Sciatic nerve (tissue), 2 donors: ENCODE measurements at regions of chr3 and their contacts with region 1.

Region 1: GRCh38 chr3:15268033-15268631 is 62.1 kb downstream of the CAPN7 start:
- DNase-seq: peak; percentile 94
- ATAC-seq: peak; percentile 82

Region 2: DNA sequence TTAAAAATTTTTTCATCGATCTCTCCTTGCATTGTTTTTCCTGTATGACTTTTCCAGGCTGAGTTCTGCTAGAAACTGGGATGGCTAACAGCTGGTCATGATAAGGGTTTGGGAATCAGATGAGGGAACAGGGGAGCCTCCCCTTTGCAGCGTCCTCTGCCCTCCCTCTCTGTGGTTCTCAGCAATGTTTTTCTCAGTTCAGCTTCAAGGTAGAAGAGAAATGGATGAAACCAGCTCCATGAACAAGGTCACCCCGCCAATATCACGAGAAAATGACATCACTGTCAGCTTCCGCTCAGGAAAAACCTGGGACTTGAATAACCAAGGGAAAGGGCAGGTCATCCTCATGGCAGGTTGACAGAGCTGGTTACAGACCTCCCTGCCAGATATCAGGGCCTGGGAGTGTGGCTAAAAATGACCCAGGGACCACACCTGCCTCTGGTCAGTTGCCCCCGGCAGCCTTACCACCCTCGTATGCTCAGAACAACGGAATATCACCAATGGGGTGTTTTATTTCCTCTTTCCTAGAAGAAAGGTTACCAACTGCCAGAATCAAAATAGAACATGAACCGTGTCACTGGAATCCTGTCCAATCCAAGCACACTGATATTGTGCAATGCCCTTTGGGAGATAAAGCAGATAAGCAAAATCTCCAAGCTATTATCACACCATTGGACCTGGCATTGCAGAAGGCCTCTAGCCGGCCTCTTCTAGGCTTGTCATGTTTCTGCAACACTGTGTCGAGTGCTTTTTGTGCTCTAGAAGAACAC is 1063.4 kb before region 1 on chr3:
- intact Hi-C with region 1: no loop called
- DNase-seq: no peak
- ATAC-seq: peak; percentile 87

Region 3: DNA sequence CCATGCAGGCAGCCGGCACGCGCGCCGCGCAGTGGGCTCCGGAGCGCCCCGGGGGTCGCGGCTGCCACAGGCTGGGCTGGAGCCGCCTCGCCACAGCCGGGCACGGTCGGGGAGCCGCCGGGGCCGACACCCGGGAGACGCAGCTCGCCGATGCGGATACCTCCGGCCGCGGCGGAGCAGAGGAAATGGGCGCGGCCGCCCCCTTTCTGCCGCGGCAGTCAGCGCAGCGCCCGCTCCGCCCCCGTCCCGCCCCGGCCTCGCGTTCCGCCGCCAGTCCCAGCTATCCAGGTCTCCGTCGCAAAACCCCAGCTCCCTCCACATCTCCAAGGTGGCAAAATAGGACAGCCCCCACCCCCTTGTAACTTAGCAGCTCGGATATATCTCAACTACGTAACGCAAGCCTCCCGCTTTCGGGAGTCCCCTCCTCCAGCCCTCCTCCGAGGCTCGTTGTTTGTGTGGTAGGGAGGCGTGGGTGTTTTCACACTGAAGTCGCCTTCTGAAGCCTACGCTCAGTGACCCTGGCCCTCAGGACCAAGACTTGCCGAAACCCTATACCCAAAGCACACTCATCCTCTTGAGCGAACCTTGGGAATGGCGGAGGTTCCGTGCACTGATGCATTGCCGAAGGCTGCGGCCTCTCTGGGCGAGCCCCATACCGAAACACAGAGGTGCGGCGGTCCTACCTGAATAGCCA is 64.4 kb after region 1 on chr3 and contains the start of gene SH3BP5:
- intact Hi-C with region 1: loop called (anchors 5 kb)
- DNase-seq: peak; percentile 90
- ATAC-seq: peak; percentile 79
- total RNA-seq, gene SH3BP5: 143 TPM

Region 4: GRCh38 chr3:15381388-15381840 is 113.3 kb after region 1 on chr3:
- intact Hi-C with region 1: loop called (anchors 2 kb)
- DNase-seq: no peak
- ATAC-seq: no peak